ENCODE measurements at regions of chr2 and their contacts with region 1.

Region 1: DNA sequence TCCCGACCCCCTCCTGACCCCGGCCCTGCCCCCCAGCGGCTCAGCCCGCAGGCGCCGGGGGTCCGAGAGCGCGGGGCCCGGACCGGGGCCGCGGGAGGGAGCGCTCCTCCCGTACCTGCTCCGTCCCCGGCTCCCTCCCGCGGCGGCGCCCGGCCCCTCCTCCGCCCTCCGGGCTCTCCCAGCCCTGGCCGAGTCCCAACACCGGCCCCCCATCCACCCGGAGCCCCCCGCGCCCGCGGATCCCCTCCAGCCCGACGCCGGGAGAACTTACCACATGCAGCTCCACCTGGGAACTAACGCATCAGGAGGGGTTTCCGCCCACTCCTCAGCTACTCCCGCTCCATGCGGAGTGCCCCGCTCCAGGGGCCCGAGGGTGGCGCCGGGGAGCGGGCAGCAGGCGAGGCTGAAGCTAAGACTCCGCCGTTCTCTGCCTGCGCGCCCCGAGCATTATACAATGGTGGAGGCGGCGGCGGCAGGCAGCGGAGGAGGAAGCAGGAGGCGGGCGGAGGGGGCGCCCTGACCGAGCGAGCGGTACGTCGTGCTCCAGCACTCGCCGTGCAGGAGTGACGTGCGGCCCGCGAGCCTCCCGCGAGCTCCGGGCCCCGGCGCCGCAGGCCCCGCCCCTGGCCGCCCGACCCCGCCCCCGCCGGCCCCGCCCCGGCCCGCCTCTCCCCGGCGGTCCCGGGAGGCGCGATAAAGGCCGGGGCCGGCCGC is at the start of gene SERTAD2:
- DNase-seq: no peak
- ATAC-seq: peak; percentile 70
- H3K4me3 ChIP-seq: peak within 1 kb of the TSS; percentile 95
- H3K27ac ChIP-seq: peak within 1 kb of the TSS; percentile 81
- H3K4me1 ChIP-seq: peaks cover 51% of the 10 kb centered on the region
- H3K27me3 ChIP-seq: no peaks in the 10 kb centered on the region
- CTCF ChIP-seq: 0 out of 6 replicates have a peak, but pooled peaks of 1 of the 3 experiments have one; percentile 6
- EP300 ChIP-seq: no peak
- POLR2A ChIP-seq: peak; percentile 90
- RAD21 ChIP-seq: 0 out of 2 replicates have a peak, but pooled peaks have one; percentile 19
- polyA plus RNA-seq, gene SERTAD2: 7.9 TPM

Region 2: DNA sequence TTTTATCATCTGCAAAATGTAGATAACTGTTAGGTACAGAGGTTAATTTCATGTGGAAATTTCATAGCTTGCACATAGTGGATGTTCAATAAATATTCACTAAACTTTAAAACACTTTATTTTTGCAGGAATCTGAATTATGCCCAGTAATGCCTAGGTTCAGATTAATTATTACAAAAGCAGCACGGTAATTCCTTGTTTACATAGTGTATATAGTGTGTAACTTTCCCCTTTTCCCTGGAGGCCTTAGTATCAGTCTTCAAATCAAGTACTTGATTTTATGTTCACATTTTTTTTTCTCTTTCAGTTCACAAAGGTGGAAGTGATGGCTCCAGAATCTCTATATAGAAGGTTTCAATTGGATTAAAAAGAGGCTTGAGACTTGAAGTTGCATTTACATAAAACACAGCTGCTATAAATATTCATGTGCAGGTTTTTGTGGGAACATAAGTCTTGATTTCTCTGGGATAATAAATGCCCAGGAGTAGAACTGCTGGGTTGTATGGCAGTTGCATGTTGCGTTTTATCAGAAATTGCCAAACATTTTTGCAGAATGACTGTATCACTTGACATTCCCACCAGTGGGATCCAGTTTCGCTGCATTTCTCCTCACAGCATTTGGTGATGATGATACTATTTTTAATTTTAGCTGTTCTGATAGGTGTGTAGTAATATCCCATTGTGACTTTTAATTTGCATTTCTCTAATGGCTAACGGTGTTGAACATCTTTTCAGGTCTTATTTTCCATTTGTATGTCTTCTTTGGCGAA is 227.1 kb before region 1 on chr2:
- CTCF ChIA-PET with region 1: no interaction called
- POLR2A ChIA-PET with region 1: no interaction called
- RAD21 ChIA-PET with region 1: no interaction called
- SMC1A ChIA-PET with region 1: no interaction called
- in situ Hi-C with region 1: no loop called
- intact Hi-C with region 1: no loop called
- DNase-seq: no peak
- ATAC-seq: no peak
- H3K4me3 ChIP-seq: no peak overlapping the region
- H3K27ac ChIP-seq: no peak overlapping the region
- H3K4me1 ChIP-seq: no peaks in the 10 kb centered on the region
- H3K27me3 ChIP-seq: no peaks in the 10 kb centered on the region
- CTCF ChIP-seq: no peak
- EP300 ChIP-seq: no peak
- POLR2A ChIP-seq: no peak
- RAD21 ChIP-seq: no peak

Region 3: DNA sequence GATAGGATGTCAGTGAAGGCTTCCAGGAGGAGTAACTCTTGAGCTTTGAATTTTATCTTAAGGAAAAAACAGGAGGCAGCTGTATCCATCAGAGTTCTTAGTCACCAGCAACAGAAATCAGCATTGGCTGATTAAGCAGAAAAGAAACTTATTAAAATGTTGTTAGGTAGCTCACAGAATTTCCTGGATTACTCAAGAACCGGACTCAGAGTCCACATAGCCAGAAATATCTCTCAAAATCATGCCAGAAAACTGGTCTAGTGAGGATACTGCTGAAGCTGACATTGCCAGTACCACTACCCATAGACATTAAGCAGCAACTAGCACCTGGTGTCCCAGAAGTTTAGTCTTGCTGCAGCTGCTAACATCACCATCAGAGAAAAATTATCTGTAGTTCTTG is 139.5 kb before region 1 on chr2:
- CTCF ChIA-PET with region 1: no interaction called
- POLR2A ChIA-PET with region 1: no interaction called
- RAD21 ChIA-PET with region 1: no interaction called
- SMC1A ChIA-PET with region 1: no interaction called
- in situ Hi-C with region 1: no loop called
- intact Hi-C with region 1: no loop called
- DNase-seq: no peak
- ATAC-seq: no peak
- H3K4me3 ChIP-seq: no peak overlapping the region
- H3K27ac ChIP-seq: no peak overlapping the region
- H3K4me1 ChIP-seq: no peaks in the 10 kb centered on the region
- H3K27me3 ChIP-seq: peaks cover 0 to 6% of the 10 kb centered on the region in 2 experiments; a peak in 2 of 4 replicates
- CTCF ChIP-seq: no peak
- EP300 ChIP-seq: no peak
- POLR2A ChIP-seq: no peak
- RAD21 ChIP-seq: no peak

Region 4: GRCh38 chr2:64635976-64636911 is 17.3 kb before region 1 on chr2:
- CTCF ChIA-PET with region 1: interaction called, 10 read pairs
- POLR2A ChIA-PET with region 1: interaction called, 131 read pairs
- RAD21 ChIA-PET with region 1: interaction called, 36 read pairs
- SMC1A ChIA-PET with region 1: interaction called, 41 read pairs
- in situ Hi-C with region 1: no loop called
- intact Hi-C with region 1: no loop called
- DNase-seq: peak; percentile 71
- ATAC-seq: peak; percentile 79
- H3K4me3 ChIP-seq: peak overlapping the region; percentile 56; the same call in 1 of the 2 replicates
- H3K27ac ChIP-seq: peak overlapping the region; percentile 95
- H3K4me1 ChIP-seq: peaks cover 58% of the 10 kb centered on the region
- H3K27me3 ChIP-seq: no peaks in the 10 kb centered on the region
- CTCF ChIP-seq: no peak
- EP300 ChIP-seq: peak; percentile 23 to 31; a peak in 1 of 4 replicates
- POLR2A ChIP-seq: peak; percentile 52
- RAD21 ChIP-seq: 0 out of 2 replicates have a peak, but pooled peaks have one; percentile 5

Region 5: DNA sequence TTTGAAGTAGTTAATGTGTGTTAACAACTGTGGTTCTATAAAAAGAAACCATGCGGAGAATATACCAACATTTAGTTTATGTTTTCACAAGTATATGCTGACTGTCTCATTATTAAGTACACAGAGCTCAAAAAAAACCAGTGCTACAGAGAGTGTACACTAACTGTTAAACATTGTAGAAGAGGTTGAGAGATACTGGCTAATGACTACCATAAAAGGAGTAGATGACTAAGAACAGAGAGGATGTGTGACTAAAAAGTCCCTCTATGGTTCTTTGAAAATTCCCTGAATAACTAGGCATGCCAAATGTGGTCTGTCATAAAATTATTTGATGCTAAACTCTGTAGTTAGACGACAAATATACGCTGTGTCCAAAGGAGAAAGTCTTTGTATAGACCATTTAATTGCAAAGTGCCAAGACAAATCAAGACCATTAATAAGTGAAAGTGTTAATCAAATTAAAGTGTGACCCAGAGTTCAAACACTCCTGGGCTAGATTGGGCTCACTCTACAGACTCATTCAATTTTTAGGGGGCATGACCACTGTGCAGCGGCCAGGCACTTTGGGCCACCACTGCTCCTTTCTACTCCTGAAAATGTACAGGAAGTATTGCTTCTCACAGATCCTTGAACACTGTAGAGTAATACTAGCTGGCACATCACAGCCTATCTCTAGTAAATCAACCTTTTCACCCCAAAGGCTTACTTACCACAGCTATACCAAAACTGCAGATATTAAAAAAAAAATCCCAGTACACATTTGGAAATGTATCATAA is 45.4 kb after region 1 on chr2:
- CTCF ChIA-PET with region 1: interaction called, 25 read pairs
- POLR2A ChIA-PET with region 1: interaction called, 81 read pairs
- RAD21 ChIA-PET with region 1: interaction called, 55 read pairs
- SMC1A ChIA-PET with region 1: interaction called, 262 read pairs
- in situ Hi-C with region 1: no loop called
- intact Hi-C with region 1: loop called (anchors 1 kb)
- DNase-seq: peak; percentile 83
- ATAC-seq: peak; percentile 90
- H3K4me3 ChIP-seq: no peak overlapping the region; the same call in 1 of the 2 replicates
- H3K27ac ChIP-seq: peak overlapping the region; percentile 98
- H3K4me1 ChIP-seq: peaks cover 53% of the 10 kb centered on the region
- H3K27me3 ChIP-seq: no peaks in the 10 kb centered on the region
- CTCF ChIP-seq: no peak
- EP300 ChIP-seq: peak; percentile 41 to 84; a peak in 2 of 4 replicates
- POLR2A ChIP-seq: no peak
- RAD21 ChIP-seq: no peak

Region 6: GRCh38 chr2:64750817-64751285 is 97.3 kb after region 1 on chr2:
- CTCF ChIA-PET with region 1: interaction called, 153 read pairs
- POLR2A ChIA-PET with region 1: interaction called, 195 read pairs
- RAD21 ChIA-PET with region 1: interaction called, 514 read pairs
- SMC1A ChIA-PET with region 1: interaction called, 945 read pairs
- in situ Hi-C with region 1: no loop called
- intact Hi-C with region 1: no loop called
- DNase-seq: peak; percentile 99
- ATAC-seq: peak; percentile 89
- H3K4me3 ChIP-seq: peak overlapping the region; percentile 98
- H3K27ac ChIP-seq: peak overlapping the region; percentile 92
- H3K4me1 ChIP-seq: 0 out of 2 replicates have a peak, but pooled peaks cover 3% of the 10 kb centered on the region
- H3K27me3 ChIP-seq: no peaks in the 10 kb centered on the region
- CTCF ChIP-seq: no peak; a peak in 2 of 6 replicates
- EP300 ChIP-seq: no peak; a peak in 1 of 4 replicates
- POLR2A ChIP-seq: peak; percentile 92
- RAD21 ChIP-seq: peak; percentile 31; the same call in 1 of the 2 replicates

Region 7: DNA sequence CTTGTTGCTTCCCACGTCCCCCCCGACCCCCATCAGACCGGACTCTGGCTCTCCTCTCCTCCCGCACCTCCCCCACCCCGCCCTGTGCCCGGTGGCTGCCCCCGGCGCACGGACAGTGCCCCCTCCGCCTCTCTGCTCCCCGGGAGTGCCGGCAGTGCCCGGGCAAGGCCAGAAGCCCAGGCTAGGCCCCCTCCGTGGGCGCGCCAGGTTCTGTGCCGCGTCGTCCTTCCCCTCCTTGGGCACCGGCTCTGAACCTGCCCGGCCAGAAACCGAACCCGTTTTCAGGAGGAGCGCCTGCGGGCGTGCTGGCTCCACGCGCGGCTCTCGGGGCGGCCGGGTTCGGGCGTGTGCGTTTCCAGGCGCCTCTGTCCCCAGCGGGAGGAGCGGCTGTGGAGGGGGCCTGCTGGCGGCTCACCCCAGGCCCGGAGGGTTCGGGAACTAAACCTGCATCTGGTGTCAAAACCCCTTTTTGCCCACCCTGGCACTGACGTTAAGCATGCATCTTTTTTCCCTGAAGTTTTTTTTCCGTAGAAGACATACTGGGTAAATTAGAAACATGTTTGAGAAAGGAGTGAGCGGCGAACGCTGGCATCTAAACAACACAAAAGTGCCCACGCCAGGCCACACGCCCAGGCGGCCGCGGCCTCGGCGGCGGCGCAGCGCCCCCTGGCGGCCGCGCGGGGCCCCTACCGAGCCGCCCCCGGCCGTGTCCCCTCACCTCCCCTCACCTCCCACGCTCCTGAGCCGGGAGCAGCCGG is 211.7 kb after region 1 on chr2:
- CTCF ChIA-PET with region 1: interaction called, 9 read pairs
- POLR2A ChIA-PET with region 1: interaction called, 19 read pairs
- RAD21 ChIA-PET with region 1: interaction called, 88 read pairs
- SMC1A ChIA-PET with region 1: interaction called, 39 read pairs
- in situ Hi-C with region 1: no loop called
- intact Hi-C with region 1: no loop called
- DNase-seq: no peak
- ATAC-seq: peak; percentile 84
- H3K4me3 ChIP-seq: peak overlapping the region; percentile 82
- H3K27ac ChIP-seq: peak overlapping the region; percentile 70
- H3K4me1 ChIP-seq: peaks cover 49% of the 10 kb centered on the region
- H3K27me3 ChIP-seq: no peaks in the 10 kb centered on the region
- CTCF ChIP-seq: peak; percentile 62 to 79 (median 64); a peak in 5 of 6 replicates
- EP300 ChIP-seq: no peak
- POLR2A ChIP-seq: no peak
- RAD21 ChIP-seq: peak; percentile 71

Region 8: GRCh38 chr2:64988420-64989125 is 335.1 kb after region 1 on chr2:
- CTCF ChIA-PET with region 1: no interaction called
- POLR2A ChIA-PET with region 1: no interaction called
- RAD21 ChIA-PET with region 1: no interaction called
- SMC1A ChIA-PET with region 1: no interaction called
- in situ Hi-C with region 1: no loop called
- intact Hi-C with region 1: loop called (anchors 5 kb)
- DNase-seq: no peak
- ATAC-seq: peak; percentile 46
- H3K4me3 ChIP-seq: peak overlapping the region; percentile 99
- H3K27ac ChIP-seq: peak overlapping the region; percentile 89
- H3K4me1 ChIP-seq: peaks cover 28% of the 10 kb centered on the region
- H3K27me3 ChIP-seq: no peaks in the 10 kb centered on the region
- CTCF ChIP-seq: peak; percentile 18 to 33 (median 20); a peak in 3 of 6 replicates
- EP300 ChIP-seq: peak; percentile 53 to 84; a peak in 3 of 4 replicates
- POLR2A ChIP-seq: peak; percentile 59
- RAD21 ChIP-seq: no peak

Measured in GM12878 (cell line).